ENCODE measurements at regions of chr6 and their contacts with region 1.

Region 1: DNA sequence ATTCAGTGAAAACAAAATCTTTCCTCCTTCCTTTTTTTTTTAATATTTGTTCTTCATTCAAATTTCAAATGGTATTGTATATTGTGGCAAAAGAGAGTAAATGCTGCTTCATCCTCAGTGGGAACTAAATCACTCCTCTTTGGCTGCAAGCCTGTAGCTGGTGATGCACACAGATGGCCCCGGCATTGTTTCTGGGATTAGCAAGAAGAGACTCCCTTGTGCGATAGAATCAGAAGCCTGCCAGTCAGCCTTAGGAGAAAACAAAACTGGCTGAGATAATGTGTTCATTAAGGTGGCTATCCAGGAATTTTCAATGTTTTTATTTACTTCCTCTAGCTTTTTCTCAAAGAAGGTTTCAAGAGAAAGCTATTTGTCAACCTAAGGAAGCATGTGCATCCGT is 20.7 kb upstream of the ELOVL2 start:
- DNase-seq: no peak
- ATAC-seq: no peak
- H3K4me3 ChIP-seq: no peak overlapping the region
- H3K4me3 Mint-ChIP-seq: no peak overlapping the region
- H3K27ac ChIP-seq: no peak overlapping the region
- H3K27ac Mint-ChIP-seq: no peak overlapping the region
- H3K4me1 ChIP-seq: no peaks in the 10 kb centered on the region
- H3K4me1 Mint-ChIP-seq: no peaks in the 10 kb centered on the region
- H3K27me3 ChIP-seq: no peaks in the 10 kb centered on the region
- H3K27me3 Mint-ChIP-seq: peaks cover 12% of the 10 kb centered on the region
- CTCF ChIP-seq: no peak

Region 2: DNA sequence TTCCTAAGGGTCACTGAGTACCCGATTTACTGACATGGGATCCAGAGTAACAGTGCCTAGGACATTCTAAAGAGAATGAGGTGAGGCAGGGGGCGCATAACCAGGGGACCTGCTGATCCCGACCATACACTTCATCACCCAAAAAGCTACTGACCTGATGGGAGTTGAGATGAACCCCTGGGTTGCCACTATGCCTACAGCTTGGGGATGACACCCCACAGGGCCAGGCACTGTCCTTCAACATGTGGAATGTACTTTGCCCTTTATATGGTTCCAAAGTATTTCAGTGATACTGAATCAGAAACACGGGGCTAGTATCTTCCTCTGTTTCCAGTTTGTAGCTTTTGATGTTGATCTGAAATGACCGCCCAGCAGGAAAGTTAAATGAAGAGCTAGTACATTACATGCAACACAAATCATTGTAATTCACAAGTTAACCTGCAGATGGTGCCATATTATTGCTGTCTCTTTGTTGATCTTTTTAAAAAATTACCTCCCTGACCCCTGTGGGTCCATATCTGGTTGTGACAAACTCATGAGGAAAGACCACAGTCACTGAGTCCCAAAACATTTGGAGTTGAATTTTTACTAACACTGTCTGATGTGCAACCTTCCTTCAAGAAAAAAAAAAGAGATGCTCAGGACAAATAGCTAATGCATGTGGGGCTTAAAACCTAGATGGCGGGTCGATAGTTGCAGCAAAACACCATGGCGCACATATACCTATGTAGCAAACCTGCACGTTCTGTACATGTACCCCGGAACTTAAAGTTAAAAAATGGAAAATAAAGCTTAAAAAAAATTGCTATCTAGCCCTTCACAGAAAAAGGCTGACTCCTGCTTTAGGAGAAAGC is 586.4 kb before region 1 on chr6:
- CTCF ChIA-PET with region 1: interaction called, 12 read pairs
- POLR2A ChIA-PET with region 1: no interaction called
- intact Hi-C with region 1: loop called in 1 of 2 experiments (anchors 2 kb)
- DNase-seq: peak in 2 of 9 experiments; percentile 38 to 52
- ATAC-seq: peak; percentile 31
- H3K4me3 ChIP-seq: no peak overlapping the region
- H3K4me3 Mint-ChIP-seq: no peak overlapping the region
- H3K27ac ChIP-seq: no peak overlapping the region
- H3K27ac Mint-ChIP-seq: no peak overlapping the region
- H3K4me1 ChIP-seq: no peaks in the 10 kb centered on the region
- H3K4me1 Mint-ChIP-seq: no peaks in the 10 kb centered on the region
- H3K27me3 ChIP-seq: no peaks in the 10 kb centered on the region
- H3K27me3 Mint-ChIP-seq: peaks cover 14% of the 10 kb centered on the region
- CTCF ChIP-seq: peak; percentile 62

Region 3: DNA sequence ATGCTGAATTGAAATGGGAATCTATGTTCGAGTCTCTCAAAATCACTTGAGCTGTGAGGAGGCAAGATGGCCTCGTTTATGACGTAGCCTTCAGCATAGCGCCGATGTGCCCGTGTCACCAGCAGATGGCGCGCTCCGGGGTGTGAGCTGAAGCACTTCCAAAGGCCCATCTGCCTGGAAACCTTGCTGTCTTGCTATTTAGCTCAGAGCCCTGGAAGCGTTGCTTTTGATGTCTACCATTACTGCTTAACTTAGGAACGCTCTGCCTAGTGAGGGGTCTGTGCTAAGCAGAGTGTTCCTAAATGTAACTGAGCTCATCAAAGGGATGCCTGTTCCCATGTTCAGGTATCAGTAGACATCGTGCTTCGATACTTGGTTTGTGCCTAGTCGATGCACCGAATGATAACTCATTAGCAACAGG is 110.2 kb before region 1 on chr6:
- CTCF ChIA-PET with region 1: no interaction called
- POLR2A ChIA-PET with region 1: no interaction called
- intact Hi-C with region 1: loop called in 1 of 2 experiments (anchors 5 kb)
- DNase-seq: peak; percentile 24 to 59 (median 47)
- ATAC-seq: peak; percentile 66
- H3K4me3 ChIP-seq: no peak overlapping the region
- H3K4me3 Mint-ChIP-seq: no peak overlapping the region
- H3K27ac ChIP-seq: no peak overlapping the region
- H3K27ac Mint-ChIP-seq: no peak overlapping the region
- H3K4me1 ChIP-seq: no peaks in the 10 kb centered on the region
- H3K4me1 Mint-ChIP-seq: peaks cover 2% of the 10 kb centered on the region
- H3K27me3 ChIP-seq: peaks cover 0 to 8% of the 10 kb centered on the region in 2 experiments
- H3K27me3 Mint-ChIP-seq: peaks cover 11% of the 10 kb centered on the region
- CTCF ChIP-seq: peak; percentile 47

Region 4: DNA sequence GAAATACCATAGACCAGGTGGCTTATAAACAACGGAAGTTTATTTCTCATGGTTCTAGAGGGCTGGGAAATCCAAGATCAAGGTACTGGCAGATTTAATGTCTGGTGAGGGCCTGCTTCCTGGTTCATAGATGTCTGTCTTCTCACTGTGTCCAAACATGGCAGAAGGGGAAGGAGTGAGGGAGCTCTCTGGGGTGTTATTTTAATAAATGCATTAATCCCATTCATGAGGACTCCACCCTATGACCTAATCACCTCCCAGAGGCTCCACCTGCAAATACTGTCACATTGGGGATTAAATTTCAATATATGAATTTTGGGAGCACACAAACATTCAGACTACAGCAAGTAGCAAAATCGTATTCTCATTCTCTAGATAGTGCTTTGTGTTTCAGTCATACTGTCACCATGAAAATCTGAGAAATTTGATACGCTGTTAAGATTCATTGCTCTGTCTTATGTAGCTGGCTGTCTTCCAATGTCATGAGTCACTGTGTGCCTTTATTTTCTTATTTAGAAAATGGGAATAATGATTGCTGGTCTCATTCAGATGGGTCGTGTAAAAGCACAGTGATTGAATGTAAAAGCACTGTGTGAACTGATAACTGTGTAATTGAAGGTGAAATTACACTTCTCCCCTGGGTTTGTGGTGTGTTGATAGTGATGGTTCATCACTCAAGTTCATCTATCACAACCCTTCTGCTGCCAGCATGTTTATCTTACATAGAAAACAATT is 55.6 kb after region 1 on chr6:
- CTCF ChIA-PET with region 1: no interaction called
- POLR2A ChIA-PET with region 1: no interaction called
- intact Hi-C with region 1: no loop called
- DNase-seq: no peak
- ATAC-seq: no peak
- H3K4me3 ChIP-seq: no peak overlapping the region
- H3K4me3 Mint-ChIP-seq: no peak overlapping the region
- H3K27ac ChIP-seq: no peak overlapping the region
- H3K27ac Mint-ChIP-seq: no peak overlapping the region
- H3K4me1 ChIP-seq: no peaks in the 10 kb centered on the region
- H3K4me1 Mint-ChIP-seq: peaks cover 32% of the 10 kb centered on the region
- H3K27me3 ChIP-seq: no peaks in the 10 kb centered on the region
- H3K27me3 Mint-ChIP-seq: no peaks in the 10 kb centered on the region
- CTCF ChIP-seq: no peak